ENCODE measurements at regions of chr7 and their contacts with region 1.

Region 1: GRCh38 chr7:29622335-29623265 is 59.0 kb downstream of the PRR15 start:
- DNase-seq: no peak
- H3K4me3 ChIP-seq: no peak overlapping the region
- H3K27ac ChIP-seq: no peak overlapping the region
- H3K4me1 ChIP-seq: peaks cover 2 to 5% (median 4%) of the 10 kb centered on the region in 4 experiments; a peak in 4 of 7 replicates
- H3K27me3 ChIP-seq: no peaks in the 10 kb centered on the region
- CTCF ChIP-seq: no peak
- EP300 ChIP-seq: no peak
- POLR2A ChIP-seq: no peak
- RAD21 ChIP-seq: no peak

Region 2: DNA sequence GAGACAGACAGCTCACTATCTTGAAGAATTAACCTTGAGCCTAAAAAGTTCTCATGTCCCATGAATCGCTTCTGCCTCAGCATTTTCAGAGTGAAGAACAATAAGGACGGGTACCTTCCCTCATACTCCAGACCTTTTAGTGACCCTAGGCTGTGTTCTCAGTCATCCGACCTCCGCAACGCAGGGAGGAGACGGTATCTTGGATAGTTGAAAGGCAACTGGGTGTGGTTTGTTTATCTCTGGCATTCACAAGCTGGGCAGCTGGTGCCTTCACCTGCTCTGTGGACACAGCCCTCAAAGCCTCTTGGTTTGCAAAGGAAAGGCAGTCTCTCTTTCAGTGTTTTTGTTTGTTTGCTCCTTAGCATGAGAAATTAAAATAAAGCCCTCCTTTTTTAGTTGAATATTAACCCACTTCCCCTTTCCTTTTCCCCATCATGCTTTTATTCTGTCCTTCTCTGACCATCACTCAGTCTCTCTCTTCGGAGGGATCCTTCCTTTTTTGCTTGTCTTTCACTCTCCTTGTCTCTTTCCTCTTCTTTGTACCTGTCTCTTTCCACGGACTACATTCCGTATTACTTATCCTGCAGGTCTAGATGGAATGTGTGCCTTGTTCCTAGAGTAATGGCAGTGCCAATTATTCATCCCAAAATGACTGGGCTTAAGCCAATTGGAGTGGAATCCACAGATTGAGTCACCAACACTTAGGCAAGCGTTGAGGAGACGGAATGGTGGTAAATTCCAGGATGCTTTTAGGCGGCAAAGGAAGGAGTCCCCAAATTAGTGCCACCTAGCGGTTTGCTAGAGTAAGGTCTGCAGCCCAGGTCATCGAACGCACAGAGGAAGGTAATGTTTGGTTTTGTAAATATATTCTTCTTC is 13.2 kb before region 1 on chr7:
- CTCF ChIA-PET with region 1: interaction called, 16 read pairs
- POLR2A ChIA-PET with region 1: no interaction called
- DNase-seq: peak in 1 of 2 experiments; percentile 66
- H3K4me3 ChIP-seq: no peak overlapping the region
- H3K27ac ChIP-seq: no peak overlapping the region
- H3K4me1 ChIP-seq: peaks cover 7 to 17% (median 8%) of the 10 kb centered on the region in 4 experiments; a peak in 5 of 7 replicates
- H3K27me3 ChIP-seq: no peaks in the 10 kb centered on the region
- CTCF ChIP-seq: peak; percentile 55 to 96 (median 70)
- EP300 ChIP-seq: no peak
- POLR2A ChIP-seq: no peak
- RAD21 ChIP-seq: peak; percentile 63 to 70